Spleen (tissue), 13 donors: ENCODE measurements at regions of chr5 and their contacts with region 1.

Region 1: DNA sequence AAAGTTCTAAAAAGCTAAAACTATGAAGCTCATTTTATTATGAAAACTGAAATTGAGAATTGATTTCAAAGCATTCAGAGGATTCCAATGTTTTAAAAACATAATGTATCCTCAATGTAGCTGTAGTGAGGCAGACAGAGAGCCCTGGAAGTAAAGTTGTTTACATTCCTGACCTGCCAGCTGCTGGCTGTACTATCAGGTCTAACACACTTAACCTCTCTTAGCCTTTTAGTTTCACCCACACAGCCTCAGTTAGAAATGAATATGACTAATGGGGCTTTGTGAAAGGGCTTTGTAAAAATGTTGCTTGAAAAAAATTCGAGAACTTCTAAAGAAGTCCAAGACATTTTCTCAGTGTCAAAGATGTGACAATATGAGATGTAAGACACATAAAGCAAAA is 122.6 kb downstream of the FBXL17 start:
- DNase-seq: no peak
- H3K4me3 ChIP-seq: no peak overlapping the region
- H3K27ac ChIP-seq: no peak overlapping the region
- H3K4me1 ChIP-seq: peaks cover 0 to 19% (median 12%) of the 10 kb centered on the region in 6 donors
- H3K27me3 ChIP-seq: no peaks in the 10 kb centered on the region
- CTCF ChIP-seq: no peak
- POLR2A ChIP-seq: no peak

Region 2: GRCh38 chr5:107783551-107783950 is 475.8 kb before region 1 on chr5:
- intact Hi-C with region 1: no loop called
- DNase-seq: no peak
- H3K4me3 ChIP-seq: no peak overlapping the region
- H3K27ac ChIP-seq: no peak overlapping the region
- H3K4me1 ChIP-seq: no peaks in the 10 kb centered on the region
- H3K27me3 ChIP-seq: no peaks in the 10 kb centered on the region
- CTCF ChIP-seq: no peak
- POLR2A ChIP-seq: no peak

Region 3: DNA sequence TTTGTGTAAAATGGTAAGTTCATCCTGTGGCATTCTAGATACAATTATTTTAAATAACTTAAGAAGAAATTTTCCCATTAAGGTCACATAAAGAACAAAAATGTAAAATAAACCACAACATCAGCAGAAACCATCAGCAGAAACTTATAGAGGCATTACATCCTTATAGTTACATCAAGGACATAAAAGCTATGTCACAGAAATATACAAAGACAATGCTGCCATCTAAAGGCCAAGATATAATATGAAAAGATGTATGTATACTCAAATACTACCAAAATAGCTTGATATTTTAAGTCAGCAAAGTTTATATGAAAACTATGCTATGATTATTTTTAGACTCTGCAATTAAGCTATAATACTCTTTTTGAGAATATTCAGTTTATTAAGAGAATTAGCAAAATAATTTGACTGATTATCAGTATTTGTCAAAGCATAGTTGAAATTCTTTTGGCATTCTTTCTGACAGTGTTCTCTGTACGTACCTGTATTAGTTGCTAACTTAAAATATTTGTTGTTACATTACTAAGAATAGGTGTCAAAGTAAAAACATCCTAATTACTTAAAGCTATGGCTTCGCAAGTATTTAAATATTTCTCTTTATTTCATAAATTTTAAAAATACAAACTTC is 86.3 kb after region 1 on chr5:
- intact Hi-C with region 1: loop called (anchors 10 kb)
- DNase-seq: no peak
- H3K4me3 ChIP-seq: no peak overlapping the region
- H3K27ac ChIP-seq: no peak overlapping the region
- H3K4me1 ChIP-seq: peaks cover 0 to 3% (median 0%) of the 10 kb centered on the region in 6 donors
- H3K27me3 ChIP-seq: no peaks in the 10 kb centered on the region
- CTCF ChIP-seq: peak in 7 of 11 experiments; percentile 36 to 44 (median 43)
- POLR2A ChIP-seq: no peak